ENCODE measurements at regions of chr6 and their contacts with region 1.

Region 1: DNA sequence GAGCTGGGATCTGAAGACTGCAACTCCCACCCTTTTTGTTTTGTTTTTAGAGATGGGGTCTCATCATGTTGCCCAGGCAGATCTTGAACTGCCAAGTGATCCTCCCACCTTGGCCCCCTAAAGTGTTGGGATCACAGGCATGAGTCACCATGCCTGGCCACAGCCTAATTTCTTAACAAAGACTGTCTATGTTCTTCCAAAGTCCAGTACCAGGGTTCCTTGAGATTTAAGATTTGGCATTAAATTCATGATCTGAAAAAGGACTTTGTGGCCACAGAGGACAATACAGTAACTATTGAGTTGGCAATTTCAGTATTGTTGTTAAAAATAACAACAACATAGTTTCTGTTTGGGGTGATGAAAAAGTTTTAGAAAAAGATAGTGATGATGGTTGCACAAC is 28.7 kb upstream of the BEND3 start:
- DNase-seq: no peak
- H3K4me3 ChIP-seq: no peak overlapping the region
- H3K27ac ChIP-seq: no peak overlapping the region
- H3K4me1 ChIP-seq: peaks cover 12% of the 10 kb centered on the region
- H3K27me3 ChIP-seq: no peaks in the 10 kb centered on the region
- CTCF ChIP-seq: no peak

Region 2: DNA sequence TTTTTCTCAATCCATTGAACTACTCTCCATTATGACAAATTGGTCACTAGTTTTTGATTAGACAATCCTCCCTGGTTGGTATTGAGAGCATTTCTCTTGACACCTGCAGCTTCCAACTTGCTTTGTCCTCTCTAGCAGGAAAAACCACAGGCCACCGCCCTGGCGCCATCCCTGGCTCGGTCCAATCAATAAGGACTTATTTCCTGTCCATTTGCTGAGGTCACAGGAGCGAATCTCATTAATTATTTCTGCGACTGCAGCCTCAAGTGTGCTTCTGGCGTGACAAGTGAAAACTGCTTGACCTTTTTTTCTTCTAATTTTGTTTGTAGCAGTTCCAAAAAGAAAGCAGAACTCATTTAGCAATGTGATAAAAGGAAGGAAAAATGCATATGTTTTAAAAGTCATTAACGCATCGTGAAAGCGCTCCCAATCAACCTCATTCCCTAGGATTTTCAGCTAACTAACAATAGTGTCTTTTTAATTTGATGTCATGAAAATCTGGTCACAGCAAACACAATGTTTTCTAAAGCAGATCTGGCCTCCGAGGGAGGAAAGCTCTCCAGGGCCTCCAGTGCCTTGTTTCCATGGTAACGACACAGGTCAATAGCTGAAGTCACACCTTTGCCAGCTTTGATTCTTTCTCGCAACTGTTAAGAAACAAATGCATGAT is 10.3 kb after region 1 on chr6:
- CTCF ChIA-PET with region 1: no interaction called
- POLR2A ChIA-PET with region 1: interaction called, 12 read pairs
- intact Hi-C with region 1: no loop called
- DNase-seq: no peak
- H3K4me3 ChIP-seq: no peak overlapping the region
- H3K27ac ChIP-seq: no peak overlapping the region
- H3K4me1 ChIP-seq: no peaks in the 10 kb centered on the region
- H3K27me3 ChIP-seq: no peaks in the 10 kb centered on the region
- CTCF ChIP-seq: no peak

Region 3: DNA sequence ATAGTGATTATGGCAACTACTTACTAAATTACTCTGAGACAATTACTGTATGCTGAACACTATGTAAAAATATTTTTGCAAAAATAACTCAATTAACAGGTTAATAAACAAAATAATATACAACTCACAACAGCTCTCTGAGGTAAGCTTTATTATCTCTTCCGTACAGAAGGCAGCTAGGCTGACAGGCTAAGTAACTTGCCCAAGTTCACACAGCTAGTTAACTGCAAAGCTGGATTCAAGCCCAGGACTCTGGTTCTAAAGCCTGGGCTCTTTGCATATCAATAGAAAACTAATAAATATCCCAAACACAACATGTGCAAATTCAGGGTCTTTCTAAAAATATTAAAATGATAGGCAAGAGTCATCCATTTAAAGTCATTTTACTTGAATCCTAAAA is 140.8 kb after region 1 on chr6:
- CTCF ChIA-PET with region 1: interaction called, 10 read pairs
- POLR2A ChIA-PET with region 1: no interaction called
- intact Hi-C with region 1: no loop called
- DNase-seq: no peak
- H3K4me3 ChIP-seq: no peak overlapping the region
- H3K27ac ChIP-seq: no peak overlapping the region
- H3K4me1 ChIP-seq: no peaks in the 10 kb centered on the region
- H3K27me3 ChIP-seq: no peaks in the 10 kb centered on the region
- CTCF ChIP-seq: no peak

Region 4: GRCh38 chr6:107386340-107386739 is 242.3 kb after region 1 on chr6:
- CTCF ChIA-PET with region 1: no interaction called
- POLR2A ChIA-PET with region 1: interaction called, 12 read pairs
- intact Hi-C with region 1: no loop called
- DNase-seq: peak in 1 of 2 experiments; percentile 40
- H3K4me3 ChIP-seq: no peak overlapping the region
- H3K27ac ChIP-seq: no peak overlapping the region
- H3K4me1 ChIP-seq: 0 out of 2 replicates have a peak, but pooled peaks cover 11% of the 10 kb centered on the region
- H3K27me3 ChIP-seq: no peaks in the 10 kb centered on the region
- CTCF ChIP-seq: no peak

Region 5: DNA sequence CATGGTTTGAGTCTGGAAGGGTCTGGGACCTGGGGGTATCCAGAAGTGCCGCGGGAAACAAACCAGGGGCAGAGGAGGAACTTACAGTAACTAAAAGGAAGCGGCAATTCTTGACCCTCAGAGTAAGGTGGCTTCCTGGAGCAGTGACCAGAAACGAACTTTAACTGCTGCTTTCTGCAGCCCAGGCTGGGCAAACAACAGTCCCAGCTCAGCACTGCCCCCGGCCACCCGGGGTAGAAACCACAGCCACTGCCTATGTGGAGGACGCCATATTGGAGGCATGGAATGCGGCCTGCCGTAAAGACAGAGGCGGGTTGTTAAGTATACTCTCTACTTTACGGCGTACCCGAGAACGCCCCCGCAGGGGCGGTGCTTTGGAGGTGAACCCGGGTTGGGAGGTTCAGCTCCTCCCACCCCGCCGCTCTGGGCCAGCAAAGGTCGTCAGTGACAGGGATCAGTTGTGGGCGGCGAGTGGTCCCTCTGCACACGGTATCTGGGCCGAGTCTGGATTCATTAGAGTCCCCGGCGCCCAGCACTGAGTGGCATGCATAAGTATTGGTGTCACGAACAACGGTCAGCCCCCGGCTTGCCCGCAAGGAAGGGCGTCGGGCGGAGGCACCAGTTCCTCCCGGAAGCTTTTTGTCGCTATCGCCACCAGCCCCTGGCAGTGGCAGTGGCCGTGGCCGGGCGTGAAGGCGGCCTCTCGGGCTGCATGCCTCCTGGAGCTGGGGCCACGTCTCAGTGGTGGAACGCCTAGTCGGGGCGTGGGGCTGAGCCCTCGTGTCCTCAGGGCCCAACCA is 315.5 kb after region 1 on chr6 and contains the start of gene PDSS2:
- CTCF ChIA-PET with region 1: no interaction called
- POLR2A ChIA-PET with region 1: no interaction called
- intact Hi-C with region 1: loop called (anchors 5 kb)
- DNase-seq: peak; percentile 96
- H3K4me3 ChIP-seq: peak within 1 kb of the TSS; percentile 82
- H3K27ac ChIP-seq: peak within 1 kb of the TSS; percentile 67
- H3K4me1 ChIP-seq: peaks cover 20% of the 10 kb centered on the region
- H3K27me3 ChIP-seq: no peaks in the 10 kb centered on the region
- CTCF ChIP-seq: peak; percentile 57; the same call in 1 of the 2 replicates
- total RNA-seq, gene PDSS2: 17.2 and 17.8 TPM in 2 replicates

Measured in PC-9 (cell line).